Ovary (tissue), 10 donors: ENCODE measurements at regions of chr7 and their contacts with region 1.

Region 1: GRCh38 chr7:108152198-108152597 is 22.0 kb upstream of the LAMB4 start:
- DNase-seq: no peak
- H3K4me3 ChIP-seq: no peak overlapping the region
- H3K27ac ChIP-seq: no peak overlapping the region
- H3K4me1 ChIP-seq: no peaks in the 10 kb centered on the region
- H3K27me3 ChIP-seq: no peaks in the 10 kb centered on the region
- CTCF ChIP-seq: no peak
- EP300 ChIP-seq: no peak
- POLR2A ChIP-seq: no peak

Region 2: GRCh38 chr7:108114117-108114841 is 37.9 kb before region 1 on chr7:
- intact Hi-C with region 1: loop called in 1 of 4 experiments (anchors 2 kb)
- DNase-seq: no peak
- H3K4me3 ChIP-seq: no peak overlapping the region
- H3K27ac ChIP-seq: no peak overlapping the region
- H3K4me1 ChIP-seq: no peaks in the 10 kb centered on the region
- H3K27me3 ChIP-seq: no peaks in the 10 kb centered on the region
- CTCF ChIP-seq: no peak
- EP300 ChIP-seq: no peak
- POLR2A ChIP-seq: no peak